Left cardiac atrium (tissue), 4 donors: ENCODE measurements at regions of chr10 and their contacts with region 1.

Region 1: DNA sequence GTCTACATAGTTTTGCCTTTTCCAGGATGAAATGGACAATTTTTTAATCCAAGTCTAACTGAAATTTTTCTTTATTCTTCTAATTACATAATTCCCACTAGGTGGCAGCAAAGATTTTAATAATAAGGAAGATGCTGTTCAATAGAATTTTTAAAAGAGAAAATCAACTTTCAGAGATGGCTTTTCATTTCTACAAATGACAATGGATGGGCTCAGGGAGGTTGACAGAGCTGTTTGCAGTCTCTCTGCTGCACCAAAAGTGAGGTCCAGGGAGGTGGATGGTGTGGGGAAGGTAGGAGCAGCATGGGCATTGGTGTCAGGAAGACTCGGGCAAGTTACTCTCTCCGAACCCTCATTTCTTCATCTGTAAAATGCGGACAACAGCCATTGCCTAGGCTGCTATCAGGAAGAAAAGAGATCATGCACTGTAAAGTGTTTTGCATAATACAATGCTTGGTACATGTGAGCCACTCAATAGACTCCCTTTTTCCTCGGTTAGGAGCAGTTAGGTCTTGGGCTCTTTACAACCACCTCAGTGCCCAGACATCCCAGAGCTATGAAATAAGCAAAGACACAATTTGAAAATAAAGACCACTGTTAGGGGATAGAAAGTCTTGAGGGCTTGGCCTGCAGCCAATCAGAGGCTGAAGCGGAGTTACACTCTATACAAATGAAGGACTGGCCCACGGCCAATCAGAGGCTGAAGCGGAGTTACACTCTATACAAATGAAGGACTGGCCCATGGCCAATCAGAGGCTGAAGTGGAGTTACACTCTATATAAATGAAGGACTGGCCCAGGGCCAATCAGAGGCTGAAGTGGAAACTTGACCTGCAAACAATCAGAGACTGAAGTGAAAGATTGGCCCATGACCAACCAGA is 107.1 kb downstream of the ABLIM1 start:
- DNase-seq: peak; percentile 79
- ATAC-seq: peak; percentile 17 to 51

Region 2: DNA sequence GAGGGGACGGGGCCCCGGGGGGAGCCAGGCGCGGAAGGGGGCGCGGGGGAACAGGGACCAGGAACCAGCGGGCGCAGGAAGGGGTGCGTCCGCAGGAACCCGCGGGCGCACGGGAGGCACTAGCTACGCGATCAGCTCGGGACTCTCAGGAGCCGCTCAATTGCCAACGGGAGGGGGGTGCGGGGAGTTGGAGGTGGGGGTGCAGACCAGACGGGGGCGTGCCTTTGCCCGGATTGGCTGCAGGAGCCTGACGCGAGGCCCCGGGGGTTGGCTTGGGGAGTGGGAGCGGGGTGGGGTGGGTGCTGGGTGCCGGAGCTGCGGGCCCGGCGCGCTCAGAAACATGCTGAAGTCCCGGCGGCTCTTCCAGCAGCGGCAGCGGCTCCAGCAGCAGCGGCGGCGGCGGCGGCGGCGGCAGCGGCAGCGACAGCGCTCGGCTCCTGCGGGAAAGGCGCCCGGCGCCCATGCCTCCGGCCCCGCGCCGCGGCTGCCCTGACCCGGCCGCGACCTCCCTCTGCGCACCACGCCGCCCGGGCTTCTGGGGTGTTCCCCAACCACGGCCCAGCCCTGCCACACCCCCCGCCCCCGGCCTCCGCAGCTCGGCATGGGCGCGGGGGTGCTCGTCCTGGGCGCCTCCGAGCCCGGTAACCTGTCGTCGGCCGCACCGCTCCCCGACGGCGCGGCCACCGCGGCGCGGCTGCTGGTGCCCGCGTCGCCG is 507.3 kb before region 1 on chr10 and contains the start of gene ADRB1:
- intact Hi-C with region 1: no loop called
- DNase-seq: peak; percentile 92
- ATAC-seq: peak; percentile 90 to 91
- total RNA-seq, gene ADRB1: 53.0 to 60.9 TPM

Region 3: GRCh38 chr10:114470956-114471905 is 79.8 kb before region 1 on chr10:
- intact Hi-C with region 1: loop called (anchors 2 to 5 kb)
- DNase-seq: peak; percentile 68
- ATAC-seq: peak; percentile 76 to 87

Region 4: GRCh38 chr10:114624951-114625780 is 74.2 kb after region 1 on chr10:
- intact Hi-C with region 1: loop called in 1 of 2 experiments (anchors 5 kb)
- DNase-seq: no peak
- ATAC-seq: no peak

Region 5: DNA sequence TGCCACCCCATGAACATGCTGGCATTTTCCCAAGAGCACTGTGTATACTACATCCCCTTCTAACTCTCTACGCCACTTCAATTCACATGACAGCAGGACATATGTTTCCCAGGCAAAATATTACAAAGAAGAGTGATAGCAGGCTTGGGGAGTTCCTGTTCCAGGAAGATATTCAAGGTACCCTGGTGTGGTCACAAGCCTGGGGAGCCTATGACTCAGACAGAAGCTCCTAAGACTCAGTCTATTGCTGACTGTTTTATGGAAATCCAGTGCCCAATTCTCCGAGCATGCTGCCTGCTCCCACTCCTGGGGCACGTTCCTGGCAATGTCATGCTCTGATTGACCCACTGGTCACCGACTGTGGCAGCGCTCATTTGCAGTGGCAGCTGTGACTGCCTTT is 130.5 kb after region 1 on chr10:
- intact Hi-C with region 1: no loop called
- DNase-seq: no peak
- ATAC-seq: peak in 1 of 2 donors; percentile 24

Region 6: GRCh38 chr10:114703377-114704107 is 152.5 kb after region 1 on chr10:
- intact Hi-C with region 1: loop called in 1 of 2 experiments (anchors 2 kb)
- DNase-seq: no peak
- ATAC-seq: peak in 1 of 2 donors; percentile 19